PC-3 (cell line): ENCODE measurements at regions of chr2 and their contacts with region 1.

Region 1: DNA sequence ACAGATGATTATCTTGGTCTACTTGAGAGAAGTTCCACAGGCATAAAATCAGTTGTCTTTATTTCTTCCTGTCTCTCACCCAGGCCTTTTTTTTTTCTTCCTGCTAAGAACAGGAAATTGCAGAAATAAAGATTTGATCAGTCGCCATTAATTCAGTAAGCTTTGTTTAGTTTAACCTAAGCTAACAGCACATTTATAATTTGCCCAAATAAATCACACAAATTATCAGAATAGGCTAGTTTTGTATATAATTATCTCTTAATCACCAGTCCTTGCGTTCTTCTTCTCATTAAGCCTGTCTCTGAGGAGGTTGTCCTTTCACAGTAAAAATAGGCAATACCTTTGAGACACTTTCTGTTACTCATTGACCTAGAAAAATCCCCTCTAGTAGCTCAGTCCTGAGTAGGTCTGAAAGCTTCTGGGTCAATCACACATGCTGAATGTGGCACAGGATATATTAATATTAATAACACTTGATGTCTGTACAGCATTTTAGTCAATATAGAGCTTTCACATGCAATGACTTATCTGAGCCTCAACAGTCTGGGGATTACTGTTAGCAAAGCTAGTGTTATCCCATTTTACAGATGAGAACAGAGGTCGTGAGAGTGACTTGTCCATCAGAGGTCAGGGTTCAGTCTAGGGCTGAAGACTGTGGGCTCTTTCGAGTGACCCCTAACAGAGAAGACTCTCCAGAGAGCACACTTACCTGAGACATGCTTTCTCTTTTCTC is 11.2 kb upstream of the STK17B start:
- DNase-seq: no peak
- ATAC-seq: no peak
- H3K4me3 ChIP-seq: no peak overlapping the region
- H3K27ac ChIP-seq: no peak overlapping the region
- H3K4me1 ChIP-seq: no peaks in the 10 kb centered on the region
- H3K27me3 ChIP-seq: no peaks in the 10 kb centered on the region
- CTCF ChIP-seq: no peak

Region 2: DNA sequence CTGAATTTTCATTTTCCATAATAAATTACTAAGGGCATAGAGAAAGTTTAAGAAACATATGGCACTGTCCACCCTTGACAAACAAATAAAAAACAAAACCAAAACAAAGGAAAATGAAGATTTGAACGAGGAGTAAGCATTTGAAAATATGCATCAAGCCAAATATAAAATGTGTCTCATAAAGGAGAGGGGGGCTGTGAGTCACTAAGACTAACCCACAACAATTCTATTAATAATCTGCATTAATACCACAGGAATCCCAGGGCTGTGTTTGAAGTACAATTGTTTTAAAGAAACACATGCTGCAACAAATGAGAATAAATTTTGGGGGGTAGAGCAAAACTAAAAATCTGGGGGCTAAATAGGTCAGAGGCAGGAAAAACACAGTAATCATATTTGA is 42.6 kb after region 1 on chr2:
- CTCF ChIA-PET with region 1: no interaction called
- POLR2A ChIA-PET with region 1: no interaction called
- intact Hi-C with region 1: loop called (anchors 5 kb)
- DNase-seq: peak; percentile 69
- ATAC-seq: peak; percentile 94
- H3K4me3 ChIP-seq: no peak overlapping the region
- H3K27ac ChIP-seq: no peak overlapping the region
- H3K4me1 ChIP-seq: peaks cover 12% of the 10 kb centered on the region
- H3K27me3 ChIP-seq: no peaks in the 10 kb centered on the region
- CTCF ChIP-seq: no peak